ENCODE measurements at regions of chr1 and their contacts with region 1.

Region 1: GRCh38 chr1:983799-984473 is 2.0 kb upstream of the PERM1 start:
- DNase-seq: peak in 1 of 3 donors; percentile 54
- ATAC-seq: peak; percentile 70 to 83 (median 78)
- H3K4me3 ChIP-seq: no peak overlapping the region
- H3K27ac ChIP-seq: no peak overlapping the region
- H3K4me1 ChIP-seq: no peaks in the 10 kb centered on the region
- H3K27me3 ChIP-seq: no peaks in the 10 kb centered on the region
- CTCF ChIP-seq: peak; percentile 50 to 97 (median 88)
- POLR2A ChIP-seq: no peak

Region 2: GRCh38 chr1:861714-862113 is 122.2 kb before region 1 on chr1:
- intact Hi-C with region 1: no loop called
- DNase-seq: no peak
- ATAC-seq: no peak
- H3K4me3 ChIP-seq: no peak overlapping the region
- H3K27ac ChIP-seq: no peak overlapping the region
- H3K4me1 ChIP-seq: peaks cover 0 to 5% (median 0%) of the 10 kb centered on the region in 4 donors
- H3K27me3 ChIP-seq: no peaks in the 10 kb centered on the region
- CTCF ChIP-seq: no peak
- POLR2A ChIP-seq: no peak

Region 3: DNA sequence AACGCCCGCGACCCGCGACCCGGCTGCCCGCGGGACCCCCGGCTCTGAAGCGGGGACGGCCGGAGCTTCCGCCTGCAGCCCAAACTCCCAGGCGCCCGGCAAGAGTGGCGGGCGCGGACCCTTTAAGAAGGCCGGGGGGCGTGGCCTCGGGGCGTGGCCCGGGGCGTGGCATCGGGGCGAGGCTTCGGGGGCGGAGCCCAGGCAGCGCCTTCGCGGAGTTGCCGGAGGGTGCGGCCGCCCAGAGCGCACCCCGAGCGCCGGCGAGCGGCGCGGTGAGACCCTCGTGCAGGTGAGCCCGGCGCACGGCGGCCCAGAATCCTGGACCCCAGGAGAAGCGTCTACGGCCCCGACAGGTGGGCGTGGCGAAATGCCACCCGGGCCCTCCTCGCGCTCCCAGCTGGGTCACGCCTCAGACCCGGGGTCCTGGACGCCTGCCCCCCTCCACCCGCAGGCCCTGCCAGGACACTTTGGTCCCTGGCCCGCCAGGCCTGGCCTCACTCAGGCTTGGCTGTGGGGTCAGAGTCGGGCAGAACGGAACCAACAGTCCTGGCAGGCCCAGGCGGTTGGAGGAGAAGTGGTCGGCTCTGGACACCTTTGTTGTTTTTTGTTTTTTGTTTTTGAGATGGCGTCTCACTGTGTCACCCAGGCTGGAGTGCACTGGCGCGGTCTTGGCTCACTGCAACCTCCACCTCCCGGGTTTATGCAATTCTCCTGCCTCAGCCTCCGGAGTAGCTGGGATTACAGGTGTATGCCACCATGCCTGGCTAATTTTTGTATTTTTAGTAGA is 75.8 kb after region 1 on chr1:
- intact Hi-C with region 1: loop called (anchors 2 to 10 kb)
- DNase-seq: peak; percentile 87 to 91 (median 90)
- ATAC-seq: peak; percentile 77 to 93 (median 84)
- H3K4me3 ChIP-seq: peak overlapping the region; percentile 42 to 53 (median 53)
- H3K27ac ChIP-seq: no peak overlapping the region
- H3K4me1 ChIP-seq: peaks cover 0 to 15% (median 3%) of the 10 kb centered on the region in 4 donors
- H3K27me3 ChIP-seq: peaks cover 0 to 20% of the 10 kb centered on the region in 2 donors
- CTCF ChIP-seq: peak in 1 of 4 donors; percentile 28
- POLR2A ChIP-seq: peak; percentile 34

Measured in right lobe of liver (tissue), 6 donors.